Activated CD4-positive, alpha-beta memory T cell treated with anti-CD3 and anti-CD28 coated beads, Interleukin-2, amount 10 ng/mL, durations not matched to agents 7 days and 5 days (primary cell): ENCODE measurements at regions of chr4 and their contacts with region 1.

Region 1: GRCh38 chr4:173380987-173381386 is 10.2 kb downstream of the SAP30 start:
- DNase-seq: no peak
- H3K4me3 Mint-ChIP-seq: no peak overlapping the region
- H3K27ac Mint-ChIP-seq: no peak overlapping the region
- H3K4me1 Mint-ChIP-seq: peaks cover under 1% of the 10 kb centered on the region
- H3K27me3 Mint-ChIP-seq: no peaks in the 10 kb centered on the region

Region 2: GRCh38 chr4:173370477-173371291 is 10.3 kb before region 1 on chr4 and contains the start of gene SAP30:
- CTCF ChIA-PET with region 1: interaction called, 8 read pairs
- POLR2A ChIA-PET with region 1: interaction called, 10 read pairs
- DNase-seq: peak; percentile 97
- H3K4me3 Mint-ChIP-seq: peak within 1 kb of the TSS; percentile 100
- H3K27ac Mint-ChIP-seq: peak within 1 kb of the TSS; percentile 97
- H3K4me1 Mint-ChIP-seq: peaks cover 52% of the 10 kb centered on the region
- H3K27me3 Mint-ChIP-seq: no peaks in the 10 kb centered on the region
- total RNA-seq, gene SAP30: 27.5 to 29.7 TPM

Region 3: DNA sequence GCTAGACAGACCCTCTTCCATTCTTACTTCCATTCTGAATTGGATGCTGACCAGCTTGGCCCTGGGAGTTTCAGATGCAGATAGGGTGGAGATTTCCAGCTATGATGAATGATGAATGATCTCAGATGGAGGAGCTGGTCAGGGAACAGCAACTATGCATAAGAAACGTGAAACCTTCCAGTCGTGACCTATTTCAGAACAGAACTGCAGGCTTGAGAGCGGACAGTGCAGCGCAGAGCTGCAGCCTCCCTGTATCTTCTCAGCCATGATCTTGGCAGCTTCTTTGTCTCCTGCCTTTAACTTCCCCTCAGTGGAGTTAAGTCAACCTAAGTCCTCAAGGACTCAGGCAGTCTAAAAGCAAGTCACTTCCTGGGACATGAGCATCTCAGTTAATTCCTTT is 192.3 kb after region 1 on chr4:
- CTCF ChIA-PET with region 1: no interaction called
- POLR2A ChIA-PET with region 1: no interaction called
- DNase-seq: no peak
- H3K4me3 Mint-ChIP-seq: no peak overlapping the region
- H3K27ac Mint-ChIP-seq: no peak overlapping the region
- H3K4me1 Mint-ChIP-seq: no peaks in the 10 kb centered on the region
- H3K27me3 Mint-ChIP-seq: peaks cover 7% of the 10 kb centered on the region